ENCODE measurements at regions of chr5 and their contacts with region 1.

Region 1: GRCh38 chr5:38373743-38374142 is 115.4 kb downstream of the EGFLAM start:
- DNase-seq: no peak
- ATAC-seq: peak in 2 of 8 donors; percentile 14 to 19
- H3K4me3 ChIP-seq: no peak overlapping the region
- H3K27ac ChIP-seq: peak overlapping the region in 4 of 10 donors; percentile 25 to 46 (median 32)
- H3K4me1 ChIP-seq: peaks cover 0 to 3% (median 0%) of the 10 kb centered on the region in 9 donors
- H3K27me3 ChIP-seq: peaks cover 0 to 21% (median 5%) of the 10 kb centered on the region in 7 donors
- CTCF ChIP-seq: no peak

Region 2: GRCh38 chr5:38094889-38095288 is 278.9 kb before region 1 on chr5:
- intact Hi-C with region 1: no loop called
- DNase-seq: no peak
- ATAC-seq: no peak
- H3K4me3 ChIP-seq: no peak overlapping the region
- H3K27ac ChIP-seq: no peak overlapping the region
- H3K4me1 ChIP-seq: no peaks in the 10 kb centered on the region
- H3K27me3 ChIP-seq: no peaks in the 10 kb centered on the region
- CTCF ChIP-seq: no peak

Region 3: GRCh38 chr5:38316544-38317224 is 57.1 kb before region 1 on chr5:
- intact Hi-C with region 1: loop called in 1 of 10 experiments (anchors 5 kb)
- DNase-seq: peak in 1 of 2 donors; percentile 41
- ATAC-seq: peak in 7 of 8 donors; percentile 56 to 89 (median 75)
- H3K4me3 ChIP-seq: no peak overlapping the region
- H3K27ac ChIP-seq: peak overlapping the region in 6 of 10 donors; percentile 14 to 56 (median 38)
- H3K4me1 ChIP-seq: peaks cover 0 to 13% (median 0%) of the 10 kb centered on the region in 9 donors
- H3K27me3 ChIP-seq: peaks cover 0 to 12% (median 0%) of the 10 kb centered on the region in 7 donors
- CTCF ChIP-seq: peak in 2 of 9 donors; percentile 19 to 25

Region 4: DNA sequence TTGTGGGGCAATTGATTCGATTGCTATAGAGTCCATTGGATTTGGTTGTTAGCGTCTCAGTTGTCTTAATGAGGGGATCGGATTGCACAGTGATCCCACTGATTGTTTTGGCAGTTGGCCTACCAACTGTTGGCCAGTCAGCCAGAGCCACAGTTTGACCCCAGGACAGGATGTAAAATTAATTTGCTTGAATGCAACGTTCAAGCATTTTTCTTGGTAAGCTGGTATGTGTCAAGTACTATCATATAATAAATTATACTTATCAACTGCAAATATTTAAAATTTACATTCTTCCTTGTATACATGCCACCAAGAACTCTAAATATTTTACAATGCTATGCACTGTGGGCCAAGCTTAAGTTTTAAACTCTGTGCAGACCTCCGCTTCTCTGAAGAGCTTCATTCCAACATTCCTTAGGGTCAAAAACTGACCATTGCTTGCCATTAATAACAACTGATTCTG is 391.7 kb after region 1 on chr5:
- intact Hi-C with region 1: no loop called
- DNase-seq: no peak
- ATAC-seq: no peak
- H3K4me3 ChIP-seq: no peak overlapping the region
- H3K27ac ChIP-seq: no peak overlapping the region
- H3K4me1 ChIP-seq: peaks cover 0 to 19% (median 0%) of the 10 kb centered on the region in 9 donors
- H3K27me3 ChIP-seq: no peaks in the 10 kb centered on the region
- CTCF ChIP-seq: no peak

Measured in heart right ventricle (tissue), 16 donors.